HepG2 (cell line): ENCODE measurements at regions of chr7 and their contacts with region 1.

Region 1: DNA sequence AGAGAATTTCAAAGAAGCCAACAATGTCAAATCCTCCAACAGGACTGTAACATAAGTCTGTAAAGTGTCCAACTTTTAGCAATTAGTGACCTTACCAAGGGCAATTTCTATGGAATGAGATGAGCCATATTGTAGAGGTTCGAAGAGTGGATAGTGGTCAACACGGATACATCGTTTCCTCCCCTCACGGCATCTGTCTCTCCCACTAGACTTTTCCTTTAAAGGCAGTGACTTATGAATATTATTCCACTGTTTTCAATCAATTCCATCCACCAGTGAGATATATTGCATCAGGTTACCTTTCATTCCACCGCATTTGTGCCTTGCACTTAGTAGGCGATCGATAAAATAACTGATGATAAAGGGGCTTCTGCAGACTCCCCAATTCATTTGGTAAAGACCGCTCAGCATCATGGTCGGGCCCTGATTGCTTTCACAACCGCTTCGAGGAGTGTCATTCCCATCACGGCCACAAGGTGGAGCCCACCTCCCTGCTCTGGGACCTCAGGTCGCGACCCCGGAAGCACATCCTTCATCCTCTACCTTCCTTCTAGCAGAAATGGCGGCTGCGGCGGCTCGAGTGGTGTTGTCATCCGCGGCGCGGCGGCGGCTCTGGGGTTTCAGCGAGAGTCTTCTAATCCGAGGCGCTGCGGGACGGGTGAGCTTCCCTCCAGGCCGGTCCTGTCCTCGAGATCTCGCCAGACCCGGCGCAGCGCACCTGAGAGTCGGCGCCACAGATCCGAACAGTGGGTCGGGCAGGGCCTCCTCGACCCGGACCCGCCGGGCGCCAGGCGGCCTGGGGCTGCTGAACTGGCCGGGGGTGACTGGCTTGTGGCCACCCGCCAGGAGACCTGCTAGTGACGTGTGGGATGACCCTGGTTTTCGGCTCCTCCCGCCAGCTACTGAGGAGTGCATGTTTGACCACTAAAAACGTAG is at the start of gene PMPCB:
- DNase-seq: peak; percentile 88
- ATAC-seq: peak; percentile 97
- H3K4me3 ChIP-seq: peak within 1 kb of the TSS; percentile 76 to 93 (median 82)
- H3K27ac ChIP-seq: peak within 1 kb of the TSS; percentile 82
- H3K4me1 ChIP-seq: peaks cover 20% of the 10 kb centered on the region
- H3K27me3 ChIP-seq: no peaks in the 10 kb centered on the region
- CTCF ChIP-seq: peak; percentile 98
- EP300 ChIP-seq: peak in 1 of 2 experiments; percentile 31; a peak in 1 of 4 replicates
- POLR2A ChIP-seq: peak; percentile 75 to 76
- RAD21 ChIP-seq: peak; percentile 82
- total RNA-seq, gene PMPCB: 75.9 and 80.8 TPM in 2 replicates

Region 2: DNA sequence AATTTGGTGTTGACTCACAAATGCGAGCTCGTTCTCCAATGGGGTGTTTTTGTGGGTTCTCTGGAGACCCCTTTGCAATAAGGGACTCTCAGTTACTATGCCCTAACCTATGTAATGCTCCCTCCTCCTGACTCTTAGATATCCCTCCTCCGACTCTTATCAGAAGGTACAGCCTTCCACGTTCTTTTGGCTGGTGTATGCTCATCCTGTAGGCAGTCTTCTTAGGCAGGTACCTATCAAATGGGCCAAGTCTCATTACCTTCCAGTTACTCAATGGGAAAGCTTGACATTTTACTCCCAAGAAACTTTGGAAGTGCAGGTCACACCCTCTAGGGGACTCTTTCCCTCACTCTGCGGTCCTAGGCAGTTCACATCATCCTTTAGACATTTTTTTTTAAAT is 116.2 kb after region 1 on chr7:
- CTCF ChIA-PET with region 1: no interaction called
- POLR2A ChIA-PET with region 1: no interaction called
- in situ Hi-C with region 1: loop called (anchors 5 kb)
- intact Hi-C with region 1: no loop called
- DNase-seq: no peak
- ATAC-seq: no peak
- H3K4me3 ChIP-seq: no peak overlapping the region
- H3K27ac ChIP-seq: no peak overlapping the region
- H3K4me1 ChIP-seq: no peaks in the 10 kb centered on the region
- H3K27me3 ChIP-seq: no peaks in the 10 kb centered on the region; a peak in 1 of 5 replicates
- CTCF ChIP-seq: no peak
- EP300 ChIP-seq: no peak
- POLR2A ChIP-seq: no peak
- RAD21 ChIP-seq: no peak